BJ (cell line): ENCODE measurements at regions of chr6 and their contacts with region 1.

Region 1: DNA sequence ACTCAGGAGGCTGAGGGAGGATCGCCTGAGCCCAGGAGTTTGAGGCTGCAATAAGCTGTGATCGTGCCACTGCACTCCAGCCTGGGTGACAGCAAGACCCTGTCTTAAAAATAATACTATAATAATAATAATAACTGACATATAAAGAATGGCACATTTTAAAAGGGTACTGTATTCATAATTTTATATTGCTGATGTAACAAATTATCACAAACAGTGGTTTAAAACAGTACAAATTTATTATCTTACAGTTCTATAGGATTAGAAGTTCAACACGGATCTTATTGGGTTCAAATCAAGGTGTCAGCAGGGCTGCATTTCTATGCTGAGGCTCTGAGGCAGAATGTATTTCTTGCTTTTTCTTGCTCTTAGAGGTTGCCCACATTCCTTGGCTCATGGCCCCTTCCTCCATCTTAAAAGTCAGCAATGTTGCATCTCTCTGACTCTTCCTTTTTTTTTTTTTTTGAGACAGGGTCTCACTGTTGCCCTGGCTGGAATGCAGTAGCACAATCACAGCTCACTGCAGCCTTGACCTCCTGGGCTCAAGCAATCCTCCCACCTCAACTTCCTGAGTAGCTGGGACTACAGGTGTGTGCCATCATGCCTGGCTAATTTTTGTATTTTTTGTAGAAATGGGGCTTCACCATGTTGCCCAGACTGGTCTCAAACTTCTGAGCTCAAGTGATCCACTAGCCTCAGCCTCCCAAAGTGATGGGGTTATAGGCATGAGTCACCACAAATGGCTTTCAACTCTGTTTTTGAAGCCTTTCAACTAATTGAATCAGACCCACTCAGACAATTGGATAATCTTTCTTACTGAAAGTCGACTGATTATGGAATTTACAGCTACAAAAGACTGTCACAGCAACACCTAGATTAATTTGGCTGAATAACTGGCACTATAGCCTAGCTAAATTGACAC is 22.8 kb upstream of the SRSF3 start:
- DNase-seq: no peak
- H3K4me3 ChIP-seq: no peak overlapping the region
- H3K27me3 ChIP-seq: no peaks in the 10 kb centered on the region
- CTCF ChIP-seq: no peak

Region 2: DNA sequence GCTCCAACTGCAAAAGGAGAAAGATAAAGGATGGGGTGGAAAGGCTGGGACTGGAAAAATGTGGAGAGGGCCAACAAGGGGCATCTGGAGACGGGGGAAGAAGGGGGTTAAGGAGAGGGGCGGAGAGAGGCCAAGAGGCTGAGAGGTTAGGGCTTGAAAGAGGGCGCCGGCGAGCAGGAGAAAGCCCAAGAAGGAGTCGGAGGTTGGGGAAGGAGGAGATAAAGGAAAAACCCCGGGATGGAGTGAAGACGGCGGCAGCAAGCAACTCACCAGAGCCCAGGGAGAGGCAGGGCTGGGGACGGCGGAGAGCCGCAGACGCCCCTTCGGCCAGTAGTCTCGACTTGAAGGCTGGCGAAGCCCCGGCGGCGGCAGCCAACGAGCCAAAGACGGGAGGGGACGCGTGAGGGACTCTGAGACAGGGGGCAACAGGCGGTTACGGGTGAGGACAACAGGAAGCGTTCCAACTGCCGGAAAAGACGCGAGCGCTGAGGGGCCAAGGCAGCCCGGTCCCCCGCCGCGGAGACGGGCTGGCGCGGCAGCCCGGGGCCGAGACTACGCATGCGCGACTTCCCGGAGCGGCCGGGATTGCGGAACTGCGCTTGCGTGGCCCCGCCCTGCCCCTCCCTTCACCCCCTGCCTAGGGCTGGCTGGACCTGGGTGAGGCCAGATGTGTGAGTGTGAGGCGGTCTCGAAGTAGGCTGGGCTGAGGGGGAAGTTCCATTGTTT is 24.3 kb before region 1 on chr6 and contains the start of gene STK38:
- CTCF ChIA-PET with region 1: no interaction called
- POLR2A ChIA-PET with region 1: interaction called, 18 read pairs
- DNase-seq: peak; percentile 41
- H3K4me3 ChIP-seq: peak within 1 kb of the TSS; percentile 99
- H3K27me3 ChIP-seq: no peaks in the 10 kb centered on the region
- CTCF ChIP-seq: peak; percentile 34
- polyA plus RNA-seq, gene STK38: 22.1 and 37.3 TPM in 2 replicates

Region 3: DNA sequence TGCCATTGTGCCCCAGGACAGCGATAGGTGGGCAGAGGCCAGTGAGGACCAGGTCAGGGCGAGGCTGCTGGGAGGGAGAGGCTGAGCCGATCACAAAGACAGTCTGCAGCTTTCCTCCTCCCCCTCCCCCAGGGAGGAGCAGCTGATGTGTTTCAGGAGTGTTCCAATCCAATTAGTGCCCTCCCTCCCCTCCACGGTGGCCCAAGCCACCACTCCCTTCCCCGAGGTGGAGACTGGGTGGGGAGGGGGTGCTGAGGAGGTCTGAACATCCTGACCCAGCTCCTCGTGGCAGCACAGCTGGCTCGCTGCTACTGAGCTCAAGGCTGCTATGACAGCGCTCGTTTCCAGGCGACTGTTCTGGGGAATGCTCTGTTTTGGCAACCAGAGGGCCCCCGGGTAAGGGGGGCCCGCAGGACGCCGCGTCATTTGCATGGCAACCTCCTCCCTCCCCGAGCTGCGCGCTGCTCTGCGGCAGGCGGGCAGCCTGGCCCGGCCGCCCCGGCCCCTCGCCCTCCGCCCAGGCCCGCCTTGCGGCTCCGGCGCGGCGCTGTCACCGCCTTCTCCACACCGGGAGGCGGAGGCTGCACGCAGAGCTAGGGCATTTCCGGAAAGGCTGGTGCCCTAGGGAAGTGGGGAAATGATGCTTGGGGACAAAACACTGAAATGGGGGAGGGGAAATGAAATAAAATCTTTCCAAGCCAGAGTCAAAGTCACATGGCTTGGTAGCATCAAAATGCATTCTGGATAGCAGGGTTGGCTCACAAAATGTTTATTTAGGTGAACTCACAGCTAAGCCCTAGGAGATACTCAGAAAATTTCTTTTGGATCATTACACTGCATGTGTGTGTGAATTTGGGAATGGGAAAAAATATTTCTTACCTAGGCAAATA is 531.1 kb after region 1 on chr6:
- CTCF ChIA-PET with region 1: no interaction called
- POLR2A ChIA-PET with region 1: interaction called, 15 read pairs
- DNase-seq: peak; percentile 78
- H3K4me3 ChIP-seq: peak overlapping the region; percentile 29
- H3K27me3 ChIP-seq: peaks cover 1% of the 10 kb centered on the region; the same call in 1 of the 2 replicates
- CTCF ChIP-seq: no peak